ENCODE measurements at regions of chr17 and their contacts with region 1.

Region 1: GRCh38 chr17:78865682-78866390 is 25.2 kb upstream of the USP36 start:
- DNase-seq: peak; percentile 87
- ATAC-seq: peak; percentile 95
- H3K4me3 ChIP-seq: no peak overlapping the region
- H3K27ac ChIP-seq: no peak overlapping the region
- H3K4me1 ChIP-seq: peaks cover 15% of the 10 kb centered on the region
- H3K27me3 ChIP-seq: no peaks in the 10 kb centered on the region
- CTCF ChIP-seq: peak; percentile 97
- EP300 ChIP-seq: no peak
- POLR2A ChIP-seq: no peak
- RAD21 ChIP-seq: peak; percentile 92

Region 2: DNA sequence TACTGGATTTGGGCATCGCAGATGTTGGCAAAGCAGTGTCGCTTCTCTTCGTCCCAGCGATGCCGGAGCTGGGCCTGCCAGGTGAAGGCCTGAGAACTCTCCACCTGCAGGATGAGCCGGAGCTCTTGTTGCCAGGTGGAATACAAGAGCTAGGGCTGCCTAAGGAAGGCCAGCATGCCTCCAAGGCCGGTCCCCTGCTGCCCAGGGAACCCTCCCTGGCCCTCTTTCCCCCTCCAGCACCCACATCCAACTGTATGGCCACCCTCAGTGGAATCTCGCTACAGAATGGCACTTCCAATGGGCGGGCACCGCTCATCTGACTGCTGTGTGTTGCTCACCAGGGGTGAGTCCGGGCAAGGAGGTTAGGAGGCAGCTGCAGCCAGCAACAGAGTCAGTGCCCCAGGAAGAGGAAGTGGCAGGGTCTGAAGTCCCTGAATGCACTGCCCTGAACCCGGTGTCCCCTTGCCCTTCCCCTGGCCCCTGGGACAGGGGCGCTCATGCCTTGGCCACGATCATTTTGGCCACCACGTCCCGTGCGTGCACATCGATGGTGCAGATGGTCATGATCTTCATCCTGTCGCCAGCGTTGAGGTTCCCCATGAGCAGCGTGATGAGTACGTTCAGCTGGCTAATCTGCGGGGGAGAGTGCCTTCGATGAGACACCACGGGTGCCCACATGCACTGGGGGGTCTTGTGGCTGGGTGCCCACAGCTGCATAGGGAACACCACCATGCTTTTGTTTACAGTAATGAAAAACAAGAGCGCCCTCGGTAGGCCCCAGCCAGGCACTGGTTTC is 364.4 kb before region 1 on chr17:
- CTCF ChIA-PET with region 1: no interaction called
- POLR2A ChIA-PET with region 1: no interaction called
- in situ Hi-C with region 1: no loop called
- intact Hi-C with region 1: no loop called
- DNase-seq: no peak
- ATAC-seq: no peak
- H3K4me3 ChIP-seq: no peak overlapping the region
- H3K27ac ChIP-seq: no peak overlapping the region
- H3K4me1 ChIP-seq: peaks cover 22% of the 10 kb centered on the region
- H3K27me3 ChIP-seq: peaks cover 0 to 16% of the 10 kb centered on the region in 2 experiments; a peak in 2 of 5 replicates
- CTCF ChIP-seq: no peak
- EP300 ChIP-seq: no peak
- POLR2A ChIP-seq: no peak
- RAD21 ChIP-seq: no peak

Region 3: DNA sequence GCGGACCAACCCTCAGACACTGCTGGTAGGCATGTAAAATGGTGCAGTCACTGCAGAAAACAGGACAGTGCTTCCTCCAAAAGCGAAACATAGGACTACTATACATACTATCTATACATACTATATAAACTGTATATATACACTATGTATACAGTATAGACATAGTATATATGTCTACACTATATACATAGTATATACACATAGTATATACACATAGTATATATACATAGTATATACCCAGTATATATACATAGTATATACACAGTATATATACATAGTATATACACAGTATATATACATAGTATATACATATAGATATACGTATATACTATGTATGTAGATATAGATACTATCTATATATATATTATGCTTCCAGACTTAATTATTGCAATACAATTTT is 18.8 kb before region 1 on chr17:
- CTCF ChIA-PET with region 1: no interaction called
- POLR2A ChIA-PET with region 1: no interaction called
- in situ Hi-C with region 1: no loop called
- intact Hi-C with region 1: no loop called
- DNase-seq: no peak
- ATAC-seq: no peak
- H3K4me3 ChIP-seq: no peak overlapping the region
- H3K27ac ChIP-seq: no peak overlapping the region
- H3K4me1 ChIP-seq: peaks cover 29% of the 10 kb centered on the region
- H3K27me3 ChIP-seq: no peaks in the 10 kb centered on the region
- CTCF ChIP-seq: no peak
- EP300 ChIP-seq: no peak
- POLR2A ChIP-seq: no peak
- RAD21 ChIP-seq: no peak

Region 4: GRCh38 chr17:78883164-78884122 is 17.6 kb after region 1 on chr17:
- CTCF ChIA-PET with region 1: no interaction called
- POLR2A ChIA-PET with region 1: interaction called, 18 read pairs
- in situ Hi-C with region 1: no loop called
- intact Hi-C with region 1: loop called (anchors 1 kb)
- DNase-seq: peak; percentile 92
- ATAC-seq: peak; percentile 83
- H3K4me3 ChIP-seq: peak overlapping the region; percentile 17 to 60 (median 38); a peak in 5 of 6 replicates
- H3K27ac ChIP-seq: peak overlapping the region; percentile 66
- H3K4me1 ChIP-seq: peaks cover 29% of the 10 kb centered on the region
- H3K27me3 ChIP-seq: no peaks in the 10 kb centered on the region
- CTCF ChIP-seq: peak; percentile 12; the same call in 1 of the 2 replicates
- EP300 ChIP-seq: peak; percentile 15 to 44; a peak in 2 of 4 replicates
- POLR2A ChIP-seq: peak; percentile 44 to 47; a peak in 2 of 4 replicates
- RAD21 ChIP-seq: peak; percentile 12; the same call in 1 of the 2 replicates

Region 5: DNA sequence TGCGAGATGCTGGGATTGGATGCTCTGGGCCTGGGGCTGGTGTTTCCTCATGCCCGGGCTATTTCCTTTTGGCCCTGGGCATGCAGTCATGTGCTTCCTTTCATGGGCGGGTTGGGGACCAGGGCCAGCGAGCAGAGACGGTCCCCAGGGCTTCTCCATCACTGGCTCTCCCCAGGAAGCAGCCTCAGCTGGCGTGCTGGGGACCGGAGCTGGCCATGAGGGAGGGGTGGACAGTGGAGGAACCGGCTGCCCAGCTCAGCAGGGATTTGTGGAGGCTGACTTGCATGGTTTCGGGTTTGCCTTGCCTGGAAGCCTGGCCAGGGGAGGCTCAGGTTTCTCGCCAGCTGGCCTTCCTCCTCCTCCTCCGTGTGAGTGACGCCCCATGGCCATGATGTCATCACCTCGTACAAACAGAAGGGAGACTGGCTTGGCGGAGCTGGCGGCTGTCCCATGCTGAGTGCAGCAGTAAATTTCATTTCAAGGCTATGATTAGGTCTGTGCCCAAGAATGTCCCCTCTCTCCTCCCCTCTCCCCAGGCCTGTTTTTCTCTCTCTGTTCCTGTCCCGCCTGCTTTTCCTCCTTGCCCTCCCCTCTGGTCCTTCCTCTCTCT is 68.2 kb after region 1 on chr17:
- CTCF ChIA-PET with region 1: no interaction called
- POLR2A ChIA-PET with region 1: interaction called, 6 read pairs
- in situ Hi-C with region 1: no loop called
- intact Hi-C with region 1: loop called (anchors 5 kb)
- DNase-seq: peak; percentile 77
- ATAC-seq: peak; percentile 32
- H3K4me3 ChIP-seq: peak overlapping the region in 2 of 3 experiments; percentile 2 to 61; a peak in 3 of 6 replicates
- H3K27ac ChIP-seq: no peak overlapping the region
- H3K4me1 ChIP-seq: peaks cover 41% of the 10 kb centered on the region
- H3K27me3 ChIP-seq: peaks cover 10 to 54% of the 10 kb centered on the region in 2 experiments; a peak in 4 of 5 replicates
- CTCF ChIP-seq: no peak
- EP300 ChIP-seq: no peak
- POLR2A ChIP-seq: no peak
- RAD21 ChIP-seq: no peak

Region 6: GRCh38 chr17:78962345-78962983 is 96.6 kb after region 1 on chr17:
- CTCF ChIA-PET with region 1: no interaction called
- POLR2A ChIA-PET with region 1: interaction called, 11 read pairs
- in situ Hi-C with region 1: no loop called
- intact Hi-C with region 1: loop called (anchors 2 kb)
- DNase-seq: peak; percentile 96
- ATAC-seq: peak; percentile 91
- H3K4me3 ChIP-seq: no peak overlapping the region
- H3K27ac ChIP-seq: peak overlapping the region; percentile 70
- H3K4me1 ChIP-seq: peaks cover 61% of the 10 kb centered on the region
- H3K27me3 ChIP-seq: peaks cover 0 to 1% of the 10 kb centered on the region in 2 experiments; a peak in 3 of 5 replicates
- CTCF ChIP-seq: peak; percentile 24
- EP300 ChIP-seq: peak; percentile 79 to 85
- POLR2A ChIP-seq: peak; percentile 46 to 60; a peak in 3 of 4 replicates
- RAD21 ChIP-seq: peak; percentile 10; the same call in 1 of the 2 replicates

Region 7: DNA sequence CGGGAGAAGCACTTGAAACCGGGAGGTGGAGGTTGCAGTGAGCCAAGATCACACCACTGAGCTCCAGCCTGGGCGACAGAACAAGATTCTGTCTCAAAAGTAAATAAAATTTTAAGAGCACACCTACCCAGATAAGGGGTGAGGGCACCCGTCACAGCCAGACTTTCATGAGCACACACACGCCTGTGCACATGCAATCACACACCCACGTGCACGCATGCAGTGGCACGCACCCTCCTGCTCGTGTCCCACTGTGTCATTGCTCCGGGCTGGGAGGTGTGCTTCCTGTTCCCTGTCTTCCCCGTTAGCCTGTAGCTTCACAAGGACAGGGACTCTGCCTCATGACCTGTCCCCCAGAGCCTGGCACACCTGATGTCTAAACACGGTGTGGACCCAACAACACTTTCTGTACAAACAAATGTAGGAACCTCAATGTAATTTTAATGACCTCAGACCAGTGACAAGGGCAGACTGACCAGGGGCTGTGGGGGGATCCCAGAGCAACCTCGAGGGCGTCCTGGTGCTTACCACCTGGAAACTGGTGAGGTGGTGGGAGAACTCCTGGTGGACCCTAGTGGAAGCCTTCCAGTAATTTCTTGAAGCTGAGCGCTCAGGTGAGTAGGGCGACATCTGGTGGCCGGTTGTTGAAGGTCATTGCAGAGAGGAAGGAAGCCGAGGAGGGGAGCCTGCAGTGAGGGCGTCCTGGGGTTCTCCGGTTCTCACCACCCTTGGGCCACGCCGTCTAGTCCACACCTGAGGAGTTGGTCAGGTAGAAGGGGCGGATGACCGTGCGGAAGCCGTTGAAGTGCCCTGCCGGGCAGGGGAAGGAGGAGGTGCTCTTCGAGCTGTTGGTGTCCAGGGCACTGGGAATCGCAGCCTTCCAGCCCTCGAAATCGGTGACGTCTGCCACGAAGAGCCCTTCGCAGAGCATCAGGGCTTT is 105.3 kb after region 1 on chr17:
- CTCF ChIA-PET with region 1: interaction called, 35 read pairs
- POLR2A ChIA-PET with region 1: interaction called, 15 read pairs
- in situ Hi-C with region 1: no loop called
- intact Hi-C with region 1: loop called (anchors 1 kb)
- DNase-seq: peak; percentile 81
- ATAC-seq: peak; percentile 51
- H3K4me3 ChIP-seq: no peak overlapping the region
- H3K27ac ChIP-seq: peak overlapping the region; percentile 0
- H3K4me1 ChIP-seq: peaks cover 27% of the 10 kb centered on the region
- H3K27me3 ChIP-seq: no peaks in the 10 kb centered on the region
- CTCF ChIP-seq: peak; percentile 96
- EP300 ChIP-seq: no peak; a peak in 1 of 4 replicates
- POLR2A ChIP-seq: no peak; a peak in 1 of 4 replicates
- RAD21 ChIP-seq: peak; percentile 93

Measured in HepG2 (cell line).